A549 (cell line): ENCODE measurements at regions of chr18 and their contacts with region 1.

Region 1: GRCh38 chr18:58768293-58768974 is 96.2 kb upstream of the ZNF532 start:
- DNase-seq: peak; percentile 63 to 67
- ATAC-seq: peak; percentile 97 to 99
- H3K4me3 ChIP-seq: 0 out of 3 replicates have a peak overlapping the region, but pooled peaks have one; percentile 21
- H3K27ac ChIP-seq: peak overlapping the region; percentile 59 to 80
- H3K4me1 ChIP-seq: peaks cover 11% of the 10 kb centered on the region; the same call in 1 of the 3 replicates
- CTCF ChIP-seq: peak; percentile 72
- EP300 ChIP-seq: no peak
- POLR2A ChIP-seq: no peak
- RAD21 ChIP-seq: peak; percentile 87 to 95

Region 2: GRCh38 chr18:58529714-58530354 is 238.6 kb before region 1 on chr18:
- CTCF ChIA-PET with region 1: interaction called, 120 read pairs
- POLR2A ChIA-PET with region 1: no interaction called
- DNase-seq: peak; percentile 55 to 61
- ATAC-seq: peak in 1 of 2 experiments; percentile 39; a peak in 2 of 6 replicates
- H3K4me3 ChIP-seq: no peak overlapping the region
- H3K27ac ChIP-seq: peak overlapping the region; percentile 94 to 100
- H3K4me1 ChIP-seq: peaks cover 49% of the 10 kb centered on the region
- CTCF ChIP-seq: peak; percentile 85
- EP300 ChIP-seq: no peak
- POLR2A ChIP-seq: no peak
- RAD21 ChIP-seq: peak; percentile 90 to 93

Region 3: GRCh38 chr18:58754544-58755068 is 13.8 kb before region 1 on chr18:
- CTCF ChIA-PET with region 1: interaction called, 55 read pairs
- POLR2A ChIA-PET with region 1: interaction called, 5 read pairs
- DNase-seq: no peak
- ATAC-seq: peak in 1 of 2 experiments; percentile 22; a peak in 2 of 6 replicates
- H3K4me3 ChIP-seq: no peak overlapping the region
- H3K27ac ChIP-seq: no peak overlapping the region
- H3K4me1 ChIP-seq: no peaks in the 10 kb centered on the region
- CTCF ChIP-seq: no peak
- EP300 ChIP-seq: no peak
- POLR2A ChIP-seq: no peak
- RAD21 ChIP-seq: no peak

Region 4: DNA sequence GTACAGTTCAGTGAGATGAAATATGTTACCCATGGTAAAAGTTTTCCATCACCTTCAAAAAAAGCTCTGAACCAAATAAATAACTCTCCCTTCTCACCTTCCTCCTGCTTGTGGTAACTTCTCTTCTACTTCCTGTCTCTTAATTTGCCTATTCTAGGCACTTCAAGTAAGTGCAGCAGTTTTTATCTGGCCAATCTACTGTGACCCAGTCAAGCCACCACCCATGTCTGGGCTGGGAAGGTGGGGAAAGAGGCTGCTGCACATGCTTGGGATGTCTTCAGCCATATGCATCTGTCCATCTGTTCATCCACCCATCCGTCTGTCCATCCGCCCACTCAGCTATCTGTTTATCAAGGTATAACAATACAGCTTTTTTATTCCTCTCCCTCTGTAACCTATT is 127.8 kb after region 1 on chr18:
- CTCF ChIA-PET with region 1: no interaction called
- POLR2A ChIA-PET with region 1: no interaction called
- DNase-seq: no peak
- ATAC-seq: no peak; a peak in 1 of 6 replicates
- H3K4me3 ChIP-seq: no peak overlapping the region
- H3K27ac ChIP-seq: peak overlapping the region in 1 of 2 experiments; percentile 71; a peak in 2 of 6 replicates
- H3K4me1 ChIP-seq: peaks cover 41% of the 10 kb centered on the region
- CTCF ChIP-seq: no peak
- EP300 ChIP-seq: no peak
- POLR2A ChIP-seq: no peak
- RAD21 ChIP-seq: no peak

Region 5: DNA sequence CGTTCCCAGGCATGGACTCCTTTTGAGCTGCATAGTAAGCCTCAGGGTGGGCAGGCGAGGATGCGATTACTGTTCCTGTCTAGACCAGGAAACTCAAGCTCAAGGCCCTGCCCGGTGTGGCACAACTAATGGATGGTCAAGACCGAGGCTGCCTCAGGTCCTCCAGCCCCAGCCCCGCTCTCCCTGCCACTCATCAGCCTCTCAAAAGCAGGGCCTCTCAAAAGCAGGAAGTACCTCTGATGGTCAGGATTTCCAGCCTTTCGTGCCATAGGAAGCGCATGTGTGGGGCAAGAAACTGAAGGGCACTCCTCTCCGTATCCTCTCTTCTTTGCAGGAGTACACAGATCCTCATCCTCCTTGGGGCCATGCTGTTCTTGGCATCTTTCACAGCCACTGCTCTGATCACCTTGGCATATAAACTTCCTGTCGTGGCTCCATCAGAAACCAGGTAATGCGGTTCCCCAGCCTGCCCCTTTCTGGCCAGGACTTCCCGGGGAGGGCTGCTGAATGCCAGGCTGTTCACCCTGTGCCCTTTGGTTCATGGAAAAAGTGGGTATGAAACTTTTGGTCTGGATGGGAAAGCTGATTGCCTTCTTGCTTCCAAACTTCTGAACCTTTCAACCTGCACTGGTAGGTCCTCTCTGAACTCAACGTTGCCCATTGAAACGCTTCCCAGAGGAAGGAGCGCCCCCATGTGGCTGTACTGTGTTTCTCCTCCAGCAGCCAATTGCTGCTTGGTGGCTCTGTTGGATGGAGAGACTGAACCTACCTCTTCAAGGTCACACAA is 288.5 kb after region 1 on chr18:
- CTCF ChIA-PET with region 1: interaction called, 32 read pairs
- POLR2A ChIA-PET with region 1: no interaction called
- DNase-seq: peak in 1 of 2 experiments; percentile 74
- ATAC-seq: peak; percentile 47 to 86; a peak in 3 of 6 replicates
- H3K4me3 ChIP-seq: no peak overlapping the region
- H3K27ac ChIP-seq: peak overlapping the region; percentile 65 to 78
- H3K4me1 ChIP-seq: peaks cover 16% of the 10 kb centered on the region; the same call in 2 of the 3 replicates
- CTCF ChIP-seq: peak; percentile 46
- EP300 ChIP-seq: no peak
- POLR2A ChIP-seq: no peak
- RAD21 ChIP-seq: peak; percentile 74 to 86

Region 6: DNA sequence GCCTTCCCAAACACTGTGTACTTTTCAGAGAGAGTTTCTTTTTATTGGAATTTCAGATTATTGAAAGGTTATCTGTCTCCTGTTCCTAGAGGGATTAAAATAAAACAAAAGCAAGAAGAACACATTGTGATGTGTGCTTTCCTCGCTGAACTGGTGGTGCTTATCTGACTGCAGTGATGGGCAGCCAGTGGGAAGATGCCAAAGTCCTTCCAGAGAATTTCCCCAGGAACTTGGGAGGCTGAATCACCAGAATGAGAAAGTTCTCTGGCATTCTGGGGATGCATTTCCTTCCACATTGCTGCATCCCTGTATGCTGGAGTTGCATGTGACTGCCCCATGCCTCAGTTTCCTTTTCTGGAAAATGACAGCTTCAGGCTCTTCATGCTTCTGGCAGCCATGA is 317.4 kb after region 1 on chr18:
- CTCF ChIA-PET with region 1: interaction called, 20 read pairs
- POLR2A ChIA-PET with region 1: no interaction called
- DNase-seq: no peak
- ATAC-seq: no peak
- H3K4me3 ChIP-seq: no peak overlapping the region
- H3K27ac ChIP-seq: no peak overlapping the region
- H3K4me1 ChIP-seq: no peaks in the 10 kb centered on the region; the same call in 2 of the 3 replicates
- CTCF ChIP-seq: no peak
- EP300 ChIP-seq: no peak
- POLR2A ChIP-seq: no peak
- RAD21 ChIP-seq: no peak